Right cardiac atrium (tissue), 5 donors: ENCODE measurements at regions of chr16 and their contacts with region 1.

Region 1: DNA sequence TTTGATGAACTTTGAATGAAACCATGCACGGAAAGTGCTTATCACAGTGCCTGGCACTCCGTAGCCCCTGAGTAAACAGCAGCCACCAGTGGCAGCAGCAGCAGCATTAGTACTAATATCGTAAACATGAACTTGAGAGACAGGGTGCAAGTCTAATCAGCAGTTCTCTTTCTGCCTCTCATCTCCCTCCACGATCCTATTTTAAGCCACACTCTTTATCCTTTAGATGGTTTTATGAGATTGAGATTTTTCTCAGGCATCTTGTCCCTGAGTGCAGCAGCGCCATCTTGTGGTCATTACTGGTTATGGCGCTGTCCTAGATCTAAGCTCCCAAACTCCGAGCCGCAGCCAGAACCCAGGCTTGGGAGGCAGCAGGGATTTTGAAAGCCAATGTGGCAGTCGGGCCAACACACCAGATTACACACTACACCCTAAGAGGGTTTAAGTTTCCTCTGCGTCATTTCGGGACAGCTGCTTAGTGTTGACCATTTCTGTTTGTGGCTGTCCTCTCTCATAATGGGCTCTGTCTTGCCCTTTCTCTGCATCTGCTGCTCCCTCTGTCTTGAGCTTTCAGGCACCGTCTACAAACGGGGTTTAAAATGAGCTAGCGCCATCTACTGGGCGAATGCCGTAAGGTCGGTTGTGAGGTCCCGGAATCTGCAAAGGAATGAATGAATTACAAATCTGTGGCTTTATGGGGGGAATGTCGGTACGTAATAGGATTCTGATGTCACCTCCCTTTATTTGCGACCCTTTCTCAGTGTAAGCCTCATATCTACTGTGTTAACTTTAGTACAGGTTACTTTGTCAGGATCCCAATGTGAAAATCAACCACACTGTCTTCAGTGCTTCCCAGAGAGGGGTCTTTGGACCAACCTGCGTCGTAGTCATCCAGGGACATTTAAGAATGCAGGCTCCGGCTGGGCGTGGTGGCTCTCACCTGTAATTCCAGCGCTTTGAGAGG is 64.5 kb downstream of the CYLD start:
- DNase-seq: peak; percentile 83 to 93 (median 89)
- ATAC-seq: peak; percentile 93 to 94
- H3K4me3 ChIP-seq: peak overlapping the region; percentile 41
- H3K27ac ChIP-seq: peak overlapping the region; percentile 65
- H3K4me1 ChIP-seq: no peaks in the 10 kb centered on the region
- H3K27me3 ChIP-seq: no peaks in the 10 kb centered on the region

Region 2: DNA sequence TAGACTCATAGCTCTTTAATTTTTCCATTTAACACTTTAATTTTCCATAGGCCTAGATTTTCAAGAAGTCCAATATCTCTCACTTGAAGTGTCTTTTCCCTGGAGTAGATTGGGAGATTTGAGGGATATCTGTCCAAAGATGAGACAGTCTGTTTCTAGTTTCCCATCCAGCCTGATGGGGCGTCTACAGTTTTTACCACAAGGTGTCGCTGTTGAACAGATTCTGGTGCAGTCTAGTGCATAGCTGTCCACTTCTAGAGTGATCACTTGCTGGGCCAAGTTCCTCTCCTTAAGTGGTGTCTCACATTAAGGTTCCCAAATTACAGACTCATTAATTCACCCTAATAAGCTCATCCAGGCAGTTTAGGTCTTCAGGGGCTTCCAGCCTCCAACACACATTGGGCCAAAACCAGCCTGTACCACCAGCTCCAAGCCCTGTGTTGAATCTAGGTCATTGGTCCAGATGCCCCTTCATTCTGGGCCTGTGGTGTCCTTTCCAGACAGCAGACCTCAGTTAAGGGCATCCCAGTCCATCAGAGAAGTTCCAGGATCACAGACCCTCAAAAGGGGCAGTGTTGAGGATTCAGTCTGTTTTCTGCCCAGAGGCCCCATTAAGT is 134.6 kb before region 1 on chr16:
- intact Hi-C with region 1: loop called in 1 of 4 experiments (anchors 10 kb)
- DNase-seq: no peak
- ATAC-seq: no peak
- H3K4me3 ChIP-seq: no peak overlapping the region
- H3K27ac ChIP-seq: no peak overlapping the region
- H3K4me1 ChIP-seq: no peaks in the 10 kb centered on the region
- H3K27me3 ChIP-seq: no peaks in the 10 kb centered on the region

Region 3: GRCh38 chr16:50681021-50681885 is 125.1 kb before region 1 on chr16 and contains the start of gene SNX20:
- intact Hi-C with region 1: loop called in 2 of 4 experiments (anchors 10 kb)
- DNase-seq: peak in 1 of 3 donors; percentile 75
- ATAC-seq: peak in 1 of 2 donors; percentile 45
- H3K4me3 ChIP-seq: peak within 1 kb of the TSS; percentile 21
- H3K27ac ChIP-seq: no peak within 1 kb of the TSS
- H3K4me1 ChIP-seq: no peaks in the 10 kb centered on the region
- H3K27me3 ChIP-seq: no peaks in the 10 kb centered on the region
- total RNA-seq, gene SNX20: 1.3 to 1.7 (median 1.3) TPM